ENCODE measurements at regions of chr11 and their contacts with region 1.

Region 1: GRCh38 chr11:65308281-65309093 is 6.2 kb upstream of the CDC42EP2 start:
- DNase-seq: peak; percentile 58
- H3K4me3 ChIP-seq: no peak overlapping the region
- H3K27ac ChIP-seq: peak overlapping the region; percentile 52
- H3K4me1 ChIP-seq: peaks cover 18% of the 10 kb centered on the region
- H3K27me3 ChIP-seq: no peaks in the 10 kb centered on the region
- CTCF ChIP-seq: no peak
- POLR2A ChIP-seq: no peak

Region 2: GRCh38 chr11:65290448-65291165 is 17.9 kb before region 1 on chr11:
- CTCF ChIA-PET with region 1: interaction called, 103 read pairs
- POLR2A ChIA-PET with region 1: no interaction called
- dilution Hi-C with region 1: no loop called
- intact Hi-C with region 1: loop called (anchors 2 kb)
- DNase-seq: peak; percentile 87
- H3K4me3 ChIP-seq: no peak overlapping the region
- H3K27ac ChIP-seq: peak overlapping the region; percentile 35
- H3K4me1 ChIP-seq: peaks cover 29% of the 10 kb centered on the region
- H3K27me3 ChIP-seq: no peaks in the 10 kb centered on the region
- CTCF ChIP-seq: no peak
- POLR2A ChIP-seq: peak; percentile 57